Heart left ventricle (tissue), 16 donors: ENCODE measurements at regions of chr9 and their contacts with region 1.

Region 1: GRCh38 chr9:89878687-89879086 is 273.9 kb downstream of the GADD45G start:
- DNase-seq: peak; percentile 75 to 95 (median 84)
- ATAC-seq: peak; percentile 89 to 91 (median 90)
- H3K4me3 ChIP-seq: no peak overlapping the region
- H3K27ac ChIP-seq: peak overlapping the region; percentile 53 to 95 (median 80)
- H3K4me1 ChIP-seq: peaks cover 0 to 62% (median 38%) of the 10 kb centered on the region in 12 donors
- H3K27me3 ChIP-seq: no peaks in the 10 kb centered on the region
- CTCF ChIP-seq: no peak
- POLR2A ChIP-seq: no peak

Region 2: GRCh38 chr9:89623925-89624420 is 254.7 kb before region 1 on chr9:
- intact Hi-C with region 1: loop called in 1 of 10 experiments (anchors 5 kb)
- DNase-seq: peak; percentile 25 to 74 (median 46)
- ATAC-seq: peak; percentile 65 to 76 (median 68)
- H3K4me3 ChIP-seq: no peak overlapping the region
- H3K27ac ChIP-seq: peak overlapping the region; percentile 30 to 85 (median 72)
- H3K4me1 ChIP-seq: peaks cover 0 to 40% (median 20%) of the 10 kb centered on the region in 12 donors
- H3K27me3 ChIP-seq: no peaks in the 10 kb centered on the region
- CTCF ChIP-seq: peak in 3 of 12 donors; percentile 19 to 21 (median 19)
- POLR2A ChIP-seq: no peak

Region 3: DNA sequence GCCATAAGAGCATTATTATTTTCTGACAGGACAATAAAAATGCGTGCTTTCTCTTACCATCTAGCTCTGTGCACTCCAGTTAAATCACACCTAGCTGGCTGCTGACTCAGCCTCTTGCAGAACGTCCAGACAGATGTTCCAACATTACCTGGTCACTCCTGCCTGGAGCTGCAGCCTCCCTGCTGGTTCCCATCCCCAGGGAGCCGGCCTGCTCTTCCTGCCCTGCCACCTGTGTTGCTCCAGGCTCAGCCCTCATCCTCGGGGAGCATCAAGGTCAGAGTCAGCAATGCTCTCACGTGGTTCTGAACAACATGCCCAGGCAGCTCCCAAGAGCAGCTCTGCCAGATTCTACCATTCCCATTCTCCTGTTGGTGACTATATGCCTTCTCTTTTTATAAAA is 192.6 kb before region 1 on chr9:
- intact Hi-C with region 1: loop called in 2 of 10 experiments (anchors 5 to 10 kb)
- DNase-seq: no peak
- ATAC-seq: peak in 1 of 4 donors; percentile 67
- H3K4me3 ChIP-seq: no peak overlapping the region
- H3K27ac ChIP-seq: peak overlapping the region in 7 of 12 donors; percentile 66 to 91 (median 83)
- H3K4me1 ChIP-seq: peaks cover 0 to 28% (median 18%) of the 10 kb centered on the region in 12 donors
- H3K27me3 ChIP-seq: no peaks in the 10 kb centered on the region
- CTCF ChIP-seq: no peak
- POLR2A ChIP-seq: no peak

Region 4: DNA sequence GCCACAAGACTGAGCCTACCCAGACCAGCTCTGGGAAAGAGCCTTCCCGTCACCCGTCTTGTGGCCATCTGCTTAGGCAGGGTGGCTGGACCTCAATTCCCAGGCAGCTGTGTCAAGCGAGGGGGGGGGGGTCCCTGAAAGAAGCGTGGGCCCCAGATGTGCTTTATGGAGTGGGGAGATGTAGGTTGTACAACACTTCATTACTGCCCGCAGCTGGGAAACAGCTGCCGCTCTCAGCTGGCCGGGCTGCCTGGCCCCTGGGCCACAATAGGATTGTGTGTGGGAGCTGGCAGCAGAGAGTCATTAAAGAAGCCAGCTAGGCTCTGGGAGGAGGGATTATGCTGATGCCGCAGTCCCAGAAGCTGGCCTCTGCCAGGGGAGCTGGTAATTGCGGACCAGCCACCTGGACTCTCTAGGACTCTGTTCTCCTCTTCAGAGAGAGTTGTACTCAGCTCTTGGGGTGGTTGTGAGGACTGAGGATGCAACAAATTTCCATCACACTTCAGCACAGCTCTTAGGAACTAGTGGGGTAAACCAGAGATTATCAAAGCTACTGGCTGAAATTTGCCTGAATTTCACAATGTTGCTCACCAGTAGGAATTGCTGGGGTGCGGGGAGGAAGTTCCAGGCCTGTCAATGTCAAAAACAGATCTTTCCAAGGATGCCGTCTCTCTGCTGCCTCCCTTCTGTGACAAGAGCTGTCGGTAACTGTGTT is 128.4 kb before region 1 on chr9:
- intact Hi-C with region 1: loop called in 2 of 10 experiments (anchors 5 to 10 kb)
- DNase-seq: peak; percentile 58 to 78 (median 75)
- ATAC-seq: peak; percentile 5 to 78 (median 68)
- H3K4me3 ChIP-seq: no peak overlapping the region
- H3K27ac ChIP-seq: no peak overlapping the region
- H3K4me1 ChIP-seq: peaks cover 0 to 28% (median 5%) of the 10 kb centered on the region in 12 donors
- H3K27me3 ChIP-seq: no peaks in the 10 kb centered on the region
- CTCF ChIP-seq: no peak
- POLR2A ChIP-seq: no peak

Region 5: GRCh38 chr9:89755821-89756220 is 122.9 kb before region 1 on chr9:
- intact Hi-C with region 1: loop called in 2 of 10 experiments (anchors 5 to 10 kb)
- DNase-seq: peak in 4 of 5 donors; percentile 43 to 78 (median 57)
- ATAC-seq: peak; percentile 27 to 78 (median 68)
- H3K4me3 ChIP-seq: no peak overlapping the region
- H3K27ac ChIP-seq: no peak overlapping the region
- H3K4me1 ChIP-seq: peaks cover 0 to 22% (median 8%) of the 10 kb centered on the region in 12 donors
- H3K27me3 ChIP-seq: no peaks in the 10 kb centered on the region
- CTCF ChIP-seq: no peak
- POLR2A ChIP-seq: no peak

Region 6: DNA sequence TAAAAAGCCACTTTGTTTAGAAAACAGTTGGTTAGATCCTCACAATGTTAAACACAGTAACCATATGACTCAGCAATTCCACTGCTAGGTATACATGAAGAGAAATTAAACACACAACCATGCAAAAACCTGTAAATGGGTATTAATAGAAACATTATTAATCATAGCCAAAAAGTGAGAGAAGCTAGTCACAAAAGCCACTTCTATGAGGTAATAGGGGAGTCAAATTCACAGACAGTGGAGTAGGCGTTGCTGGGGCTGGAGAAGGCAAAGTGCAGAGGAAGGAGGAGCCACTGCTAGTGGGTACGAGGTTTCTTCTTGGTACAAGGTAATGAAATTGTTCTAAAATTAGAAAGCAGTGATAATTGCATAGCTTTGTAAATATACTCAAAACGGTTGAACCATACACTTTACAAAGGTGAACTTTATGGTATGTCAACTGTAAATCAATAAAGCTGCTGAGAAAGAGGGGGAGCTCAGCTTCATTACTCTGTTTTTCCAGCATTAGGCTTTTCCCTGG is 90.5 kb after region 1 on chr9:
- intact Hi-C with region 1: no loop called
- DNase-seq: no peak
- ATAC-seq: no peak
- H3K4me3 ChIP-seq: no peak overlapping the region
- H3K27ac ChIP-seq: no peak overlapping the region
- H3K4me1 ChIP-seq: no peaks in the 10 kb centered on the region
- H3K27me3 ChIP-seq: no peaks in the 10 kb centered on the region
- CTCF ChIP-seq: no peak
- POLR2A ChIP-seq: no peak